ENCODE measurements at regions of chr18 and their contacts with region 1.

Region 1: GRCh38 chr18:46173393-46174341 is 69.5 kb downstream of the HAUS1 start:
- DNase-seq: peak; percentile 94 to 98 (median 98)
- ATAC-seq: peak; percentile 98
- H3K4me3 ChIP-seq: peak overlapping the region; percentile 94
- H3K27ac ChIP-seq: peak overlapping the region; percentile 91
- H3K4me1 ChIP-seq: peaks cover 3% of the 10 kb centered on the region
- H3K27me3 ChIP-seq: no peaks in the 10 kb centered on the region

Region 2: GRCh38 chr18:46051731-46052461 is 121.8 kb before region 1 on chr18:
- intact Hi-C with region 1: no loop called
- DNase-seq: no peak
- ATAC-seq: peak; percentile 18 to 36
- H3K4me3 ChIP-seq: no peak overlapping the region
- H3K27ac ChIP-seq: no peak overlapping the region
- H3K4me1 ChIP-seq: no peaks in the 10 kb centered on the region
- H3K27me3 ChIP-seq: no peaks in the 10 kb centered on the region

Region 3: GRCh38 chr18:46213295-46213694 is 39.6 kb after region 1 on chr18:
- intact Hi-C with region 1: loop called in 1 of 4 experiments (anchors 5 kb)
- DNase-seq: no peak
- ATAC-seq: peak; percentile 18 to 22
- H3K4me3 ChIP-seq: no peak overlapping the region
- H3K27ac ChIP-seq: no peak overlapping the region
- H3K4me1 ChIP-seq: peaks cover 2% of the 10 kb centered on the region
- H3K27me3 ChIP-seq: no peaks in the 10 kb centered on the region

Region 4: GRCh38 chr18:46264235-46264893 is 90.7 kb after region 1 on chr18:
- intact Hi-C with region 1: loop called in 1 of 4 experiments (anchors 10 kb)
- DNase-seq: no peak
- ATAC-seq: peak; percentile 27 to 36
- H3K4me3 ChIP-seq: no peak overlapping the region
- H3K27ac ChIP-seq: no peak overlapping the region
- H3K4me1 ChIP-seq: peaks cover 8% of the 10 kb centered on the region
- H3K27me3 ChIP-seq: no peaks in the 10 kb centered on the region

Region 5: GRCh38 chr18:46281185-46282176 is 107.8 kb after region 1 on chr18:
- intact Hi-C with region 1: loop called in 1 of 4 experiments (anchors 10 kb)
- DNase-seq: peak; percentile 66 to 87 (median 85)
- ATAC-seq: peak; percentile 82 to 87
- H3K4me3 ChIP-seq: no peak overlapping the region
- H3K27ac ChIP-seq: no peak overlapping the region
- H3K4me1 ChIP-seq: peaks cover 8% of the 10 kb centered on the region
- H3K27me3 ChIP-seq: no peaks in the 10 kb centered on the region

Region 6: DNA sequence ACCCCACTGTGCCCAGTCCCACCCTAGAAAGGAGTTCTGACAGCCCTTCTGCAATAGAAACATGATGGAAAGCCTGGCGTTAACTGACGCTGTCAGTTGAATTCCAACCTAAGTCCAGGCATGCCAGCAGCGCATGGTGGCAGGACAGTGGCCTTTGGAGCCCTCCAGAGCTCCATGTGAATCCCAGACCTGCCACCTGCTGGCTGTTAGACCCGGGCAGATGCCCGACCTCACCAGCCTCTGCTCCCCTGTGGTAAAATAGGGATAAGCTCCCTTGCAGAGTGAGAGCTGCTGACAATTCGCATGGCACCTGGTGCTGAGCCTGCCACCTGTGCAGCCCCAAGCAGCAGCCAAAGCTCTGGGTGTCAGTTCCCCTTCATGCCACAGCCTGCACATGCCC is 344.8 kb after region 1 on chr18:
- intact Hi-C with region 1: loop called in 2 of 4 experiments (anchors 10 kb)
- DNase-seq: peak in 2 of 3 donors; percentile 66 to 74
- ATAC-seq: peak; percentile 75 to 83
- H3K4me3 ChIP-seq: no peak overlapping the region
- H3K27ac ChIP-seq: no peak overlapping the region
- H3K4me1 ChIP-seq: no peaks in the 10 kb centered on the region
- H3K27me3 ChIP-seq: no peaks in the 10 kb centered on the region